Astrocyte of the cerebellum (primary cell): ENCODE measurements at regions of chr3 and their contacts with region 1.

Region 1: DNA sequence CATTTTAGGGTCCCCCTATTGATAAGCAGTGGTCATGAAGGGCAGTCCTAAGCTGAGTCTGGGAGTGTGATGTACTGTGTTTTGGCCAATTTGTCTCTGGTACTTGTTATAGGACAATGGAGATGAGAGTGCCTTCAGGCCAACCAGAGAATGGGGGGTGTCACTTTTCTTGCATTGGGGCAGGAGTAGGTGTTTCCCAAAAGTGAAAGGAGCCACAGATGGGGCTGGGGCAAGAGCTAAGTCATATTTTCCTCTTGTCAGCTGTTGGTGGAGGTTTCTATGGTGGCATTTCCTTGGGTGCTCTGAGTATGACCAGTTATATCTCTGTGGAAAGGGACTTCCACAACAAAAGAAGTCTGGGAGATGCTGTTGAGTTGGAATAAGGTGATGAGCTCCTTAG is 24.7 kb upstream of the BSN start:
- DNase-seq: no peak
- H3K4me3 ChIP-seq: no peak overlapping the region
- CTCF ChIP-seq: no peak

Region 2: GRCh38 chr3:49461443-49462171 is 68.0 kb before region 1 on chr3:
- in situ Hi-C with region 1: no loop called
- DNase-seq: no peak
- H3K4me3 ChIP-seq: no peak overlapping the region
- CTCF ChIP-seq: no peak

Region 3: DNA sequence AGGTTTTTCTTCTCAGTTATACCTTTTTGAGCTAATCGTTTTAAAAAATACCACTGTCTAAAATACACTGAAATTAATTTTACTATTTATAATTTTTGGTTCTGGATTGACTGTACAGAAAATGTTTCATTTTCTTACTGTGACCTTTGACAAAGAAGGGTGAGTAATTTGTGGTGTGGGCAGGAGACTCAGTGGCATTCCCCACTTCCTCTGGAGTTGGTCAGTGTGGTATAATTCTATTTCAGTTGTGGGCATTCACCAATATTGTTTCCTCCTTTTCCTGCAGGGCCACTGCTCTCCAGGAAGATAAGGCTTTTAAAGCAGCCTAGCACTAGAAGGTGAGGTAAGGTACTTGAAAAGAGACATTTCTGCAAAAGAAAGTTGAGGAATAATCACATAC is 53.0 kb before region 1 on chr3:
- in situ Hi-C with region 1: no loop called
- DNase-seq: no peak
- H3K4me3 ChIP-seq: no peak overlapping the region
- CTCF ChIP-seq: no peak

Region 4: GRCh38 chr3:49582177-49582576 is 52.6 kb after region 1 on chr3:
- in situ Hi-C with region 1: loop called (anchors 5 kb)
- DNase-seq: no peak
- H3K4me3 ChIP-seq: no peak overlapping the region
- CTCF ChIP-seq: no peak